Caco-2 (cell line): ENCODE measurements at regions of chr3 and their contacts with region 1.

Region 1: DNA sequence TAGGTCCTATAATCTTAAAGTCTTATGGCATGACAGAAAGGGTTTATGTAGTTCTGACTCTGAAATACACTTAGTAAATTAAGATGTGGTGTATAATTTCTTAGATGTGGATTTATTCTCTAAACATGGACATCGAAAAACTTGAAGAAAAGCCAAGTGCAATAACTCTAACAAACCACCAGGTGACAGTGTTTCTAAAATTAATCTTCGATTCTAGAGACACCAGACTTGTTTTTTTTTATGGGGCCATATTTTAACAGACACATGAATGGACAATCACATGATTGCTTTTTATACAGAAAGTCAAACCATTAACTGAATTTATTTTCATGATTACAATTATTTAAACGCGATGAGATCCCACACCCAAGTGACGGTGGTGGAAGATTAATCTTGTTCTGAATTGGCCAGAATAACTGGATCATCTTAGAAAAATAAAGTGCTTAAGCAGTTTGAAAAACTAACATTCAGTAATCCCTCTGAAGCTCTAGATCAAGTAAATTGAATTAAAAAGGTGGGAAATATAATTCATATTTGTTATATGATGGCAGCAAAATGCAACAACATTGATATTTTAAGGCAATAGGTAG is 305.1 kb downstream of the LSAMP start:
- DNase-seq: peak in 1 of 2 experiments; percentile 2
- H3K4me3 ChIP-seq: no peak overlapping the region
- H3K4me3 Mint-ChIP-seq: no peak overlapping the region
- H3K27ac Mint-ChIP-seq: no peak overlapping the region
- H3K4me1 ChIP-seq: no peaks in the 10 kb centered on the region
- H3K4me1 Mint-ChIP-seq: no peaks in the 10 kb centered on the region
- H3K27me3 ChIP-seq: no peaks in the 10 kb centered on the region
- H3K27me3 Mint-ChIP-seq: peaks cover 6% of the 10 kb centered on the region
- CTCF ChIP-seq: peak; percentile 83 to 89

Region 2: DNA sequence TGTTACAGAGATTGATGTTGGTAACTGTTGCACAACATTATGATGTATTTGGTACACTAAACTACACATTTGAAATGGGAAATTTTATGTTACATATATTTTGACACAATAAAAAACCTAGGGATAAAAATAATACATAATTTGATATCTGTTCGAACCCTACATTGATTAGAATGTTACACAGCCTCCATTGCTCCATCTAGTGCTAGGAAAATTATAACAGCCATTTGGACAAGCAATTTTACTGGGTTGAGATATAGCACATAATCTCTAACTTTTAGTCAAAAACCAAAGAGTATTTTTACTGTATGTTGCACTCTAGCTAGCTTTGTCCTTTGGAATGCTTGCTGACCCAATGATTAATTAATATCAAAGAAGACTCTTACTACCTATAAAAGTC is 197.0 kb after region 1 on chr3:
- CTCF ChIA-PET with region 1: no interaction called
- POLR2A ChIA-PET with region 1: no interaction called
- intact Hi-C with region 1: loop called (anchors 2 kb)
- DNase-seq: no peak
- H3K4me3 ChIP-seq: no peak overlapping the region
- H3K4me3 Mint-ChIP-seq: no peak overlapping the region
- H3K27ac Mint-ChIP-seq: no peak overlapping the region
- H3K4me1 ChIP-seq: no peaks in the 10 kb centered on the region
- H3K4me1 Mint-ChIP-seq: no peaks in the 10 kb centered on the region
- H3K27me3 ChIP-seq: no peaks in the 10 kb centered on the region
- H3K27me3 Mint-ChIP-seq: no peaks in the 10 kb centered on the region
- CTCF ChIP-seq: no peak

Region 3: GRCh38 chr3:116517308-116517707 is 377.1 kb after region 1 on chr3:
- CTCF ChIA-PET with region 1: no interaction called
- POLR2A ChIA-PET with region 1: no interaction called
- intact Hi-C with region 1: loop called (anchors 2 kb)
- DNase-seq: no peak
- H3K4me3 ChIP-seq: no peak overlapping the region
- H3K4me3 Mint-ChIP-seq: no peak overlapping the region
- H3K27ac Mint-ChIP-seq: no peak overlapping the region
- H3K4me1 ChIP-seq: no peaks in the 10 kb centered on the region
- H3K4me1 Mint-ChIP-seq: no peaks in the 10 kb centered on the region
- H3K27me3 ChIP-seq: no peaks in the 10 kb centered on the region
- H3K27me3 Mint-ChIP-seq: peaks cover under 1% of the 10 kb centered on the region
- CTCF ChIP-seq: peak; percentile 27 to 32